IMR-90 (cell line): ENCODE measurements at regions of chr2 and their contacts with region 1.

Region 1: GRCh38 chr2:11129598-11130449 is 25.4 kb upstream of the SLC66A3 start:
- DNase-seq: no peak
- ATAC-seq: no peak
- H3K4me3 ChIP-seq: no peak overlapping the region
- H3K27ac ChIP-seq: no peak overlapping the region
- H3K4me1 ChIP-seq: peaks cover 14% of the 10 kb centered on the region
- H3K27me3 ChIP-seq: no peaks in the 10 kb centered on the region
- CTCF ChIP-seq: no peak
- POLR2A ChIP-seq: no peak
- RAD21 ChIP-seq: no peak

Region 2: DNA sequence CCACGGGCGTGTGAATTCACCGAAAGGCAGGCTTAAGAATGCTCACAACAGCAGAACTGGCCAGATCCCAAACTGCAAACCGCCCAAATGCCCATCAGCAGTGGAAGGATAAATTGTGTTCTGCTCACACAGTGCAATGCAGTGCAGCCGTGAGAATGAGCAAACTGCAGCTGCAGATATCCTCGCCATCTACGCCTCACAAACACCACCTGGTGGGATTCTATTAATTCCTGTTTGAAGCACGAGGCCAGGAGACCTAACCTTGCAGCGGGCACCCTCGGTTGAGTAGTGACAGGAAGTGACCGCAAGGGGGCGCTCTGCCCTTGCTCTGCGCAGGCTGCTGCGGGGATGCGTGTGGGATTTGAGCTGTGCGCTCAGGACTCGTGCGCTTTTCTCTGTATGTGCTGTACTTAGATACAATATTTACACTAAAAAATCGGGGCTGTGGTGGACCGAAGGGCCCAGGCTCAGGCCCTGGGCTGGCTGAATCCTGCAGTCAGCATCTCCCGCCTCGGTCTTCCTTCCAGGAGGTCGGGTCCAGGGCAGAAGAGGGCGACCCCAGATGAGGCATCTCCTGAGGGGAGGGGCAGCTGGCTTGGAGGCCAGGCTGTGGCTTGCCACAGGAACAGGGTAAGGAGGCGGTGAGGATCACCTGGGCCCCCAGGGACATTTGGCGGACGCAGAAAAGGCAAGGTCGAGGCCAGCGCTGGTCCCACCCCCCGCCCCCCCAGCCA is 297.5 kb before region 1 on chr2:
- CTCF ChIA-PET with region 1: interaction called, 35 read pairs
- POLR2A ChIA-PET with region 1: no interaction called
- dilution Hi-C with region 1: no loop called
- in situ Hi-C with region 1: no loop called
- intact Hi-C with region 1: no loop called
- DNase-seq: peak; percentile 77
- ATAC-seq: peak; percentile 94
- H3K4me3 ChIP-seq: no peak overlapping the region
- H3K27ac ChIP-seq: no peak overlapping the region
- H3K4me1 ChIP-seq: no peaks in the 10 kb centered on the region
- H3K27me3 ChIP-seq: peaks cover 34% of the 10 kb centered on the region
- CTCF ChIP-seq: peak; percentile 97
- POLR2A ChIP-seq: no peak
- RAD21 ChIP-seq: peak; percentile 98

Region 3: DNA sequence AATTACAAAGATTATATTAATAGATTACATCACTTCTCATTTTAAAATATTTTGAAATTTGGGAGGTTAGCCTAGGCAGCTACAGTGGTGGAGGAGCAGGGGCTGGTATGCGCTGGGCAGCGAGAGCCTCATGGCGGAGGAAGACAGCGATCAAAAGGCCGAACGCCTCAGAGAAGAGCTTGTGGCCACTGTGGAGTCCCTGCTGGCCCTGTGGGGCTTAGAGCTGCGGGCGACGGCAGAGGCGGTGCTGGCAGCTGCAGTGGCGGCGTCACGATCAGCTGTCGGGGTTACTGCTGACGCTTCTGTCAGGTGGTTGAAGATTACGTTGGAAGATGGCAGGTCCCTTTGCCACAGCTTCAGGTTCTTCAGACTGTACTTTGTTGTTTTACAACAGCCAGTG is 127.3 kb after region 1 on chr2:
- CTCF ChIA-PET with region 1: no interaction called
- POLR2A ChIA-PET with region 1: no interaction called
- dilution Hi-C with region 1: no loop called
- in situ Hi-C with region 1: no loop called
- intact Hi-C with region 1: no loop called
- DNase-seq: no peak
- ATAC-seq: no peak
- H3K4me3 ChIP-seq: no peak overlapping the region
- H3K27ac ChIP-seq: no peak overlapping the region
- H3K4me1 ChIP-seq: peaks cover 5% of the 10 kb centered on the region
- H3K27me3 ChIP-seq: no peaks in the 10 kb centered on the region
- CTCF ChIP-seq: no peak
- POLR2A ChIP-seq: no peak
- RAD21 ChIP-seq: no peak

Region 4: DNA sequence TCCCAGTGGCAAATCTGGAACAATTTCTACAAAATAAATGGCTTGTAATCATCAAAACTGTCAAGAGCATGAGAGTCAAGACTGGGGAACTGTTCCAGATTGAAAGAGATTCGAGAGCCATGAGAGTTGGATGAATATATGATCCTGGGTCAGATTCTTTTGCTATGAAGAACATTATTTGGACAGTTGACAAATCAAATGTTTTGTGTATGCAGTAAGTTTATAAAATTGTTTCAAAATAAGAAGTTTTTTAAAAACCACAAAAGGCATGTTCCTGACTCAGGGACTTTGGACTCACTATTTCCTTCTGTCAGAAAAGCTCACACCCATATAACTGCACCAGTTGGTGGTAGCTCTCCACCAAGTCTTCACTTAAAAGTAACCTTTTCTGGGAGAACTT is 176.1 kb after region 1 on chr2:
- CTCF ChIA-PET with region 1: no interaction called
- POLR2A ChIA-PET with region 1: no interaction called
- dilution Hi-C with region 1: no loop called
- in situ Hi-C with region 1: no loop called
- intact Hi-C with region 1: loop called (anchors 10 kb)
- DNase-seq: peak; percentile 92
- ATAC-seq: peak; percentile 95
- H3K4me3 ChIP-seq: no peak overlapping the region
- H3K27ac ChIP-seq: no peak overlapping the region
- H3K4me1 ChIP-seq: peaks cover 10% of the 10 kb centered on the region
- H3K27me3 ChIP-seq: no peaks in the 10 kb centered on the region
- CTCF ChIP-seq: no peak
- POLR2A ChIP-seq: no peak
- RAD21 ChIP-seq: no peak

Region 5: DNA sequence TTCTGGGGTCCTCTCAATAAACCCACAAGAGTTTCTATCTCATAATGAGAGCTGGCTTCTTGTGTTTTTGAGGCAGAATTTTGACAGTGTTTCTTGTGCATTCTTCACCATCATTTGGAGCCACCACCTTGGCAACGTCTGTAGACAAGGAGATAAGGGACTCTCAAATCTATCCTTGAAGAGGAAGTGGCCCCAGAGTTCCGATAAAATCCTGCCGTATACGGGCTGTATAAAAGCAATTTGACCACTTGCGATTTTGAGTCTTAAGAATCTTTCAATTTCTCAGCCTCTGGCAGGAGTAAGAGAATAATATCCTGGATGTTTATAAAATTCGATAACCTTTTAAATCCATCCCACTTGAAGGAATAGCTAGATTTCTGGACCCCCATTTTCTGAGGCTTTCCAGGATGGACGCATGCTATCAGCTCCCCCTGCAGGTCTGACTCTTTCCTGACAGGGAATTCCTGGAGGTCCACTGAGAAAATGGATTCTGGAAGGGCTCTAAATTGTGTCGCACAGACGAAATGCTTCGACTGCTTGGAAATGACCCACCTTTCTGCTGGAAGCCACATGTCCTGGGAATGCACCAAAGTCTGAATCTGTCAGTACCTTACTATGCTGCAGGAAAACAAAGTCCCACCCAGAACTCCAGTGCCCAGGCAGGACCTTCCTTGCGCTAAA is 282.1 kb after region 1 on chr2:
- CTCF ChIA-PET with region 1: interaction called, 14 read pairs
- POLR2A ChIA-PET with region 1: no interaction called
- dilution Hi-C with region 1: no loop called
- in situ Hi-C with region 1: no loop called
- intact Hi-C with region 1: loop called (anchors 1 kb)
- DNase-seq: peak; percentile 63
- ATAC-seq: peak; percentile 54
- H3K4me3 ChIP-seq: peak overlapping the region; percentile 37; the same call in 1 of the 2 replicates
- H3K27ac ChIP-seq: no peak overlapping the region
- H3K4me1 ChIP-seq: peaks cover 5% of the 10 kb centered on the region
- H3K27me3 ChIP-seq: no peaks in the 10 kb centered on the region
- CTCF ChIP-seq: peak; percentile 91
- POLR2A ChIP-seq: no peak
- RAD21 ChIP-seq: peak; percentile 92

Region 6: GRCh38 chr2:11446733-11447248 is 317.0 kb after region 1 on chr2:
- CTCF ChIA-PET with region 1: interaction called, 13 read pairs
- POLR2A ChIA-PET with region 1: no interaction called
- dilution Hi-C with region 1: no loop called
- in situ Hi-C with region 1: loop called (anchors 5 kb)
- intact Hi-C with region 1: loop called (anchors 1 kb)
- DNase-seq: peak; percentile 67
- ATAC-seq: peak; percentile 92
- H3K4me3 ChIP-seq: no peak overlapping the region
- H3K27ac ChIP-seq: no peak overlapping the region
- H3K4me1 ChIP-seq: no peaks in the 10 kb centered on the region
- H3K27me3 ChIP-seq: no peaks in the 10 kb centered on the region
- CTCF ChIP-seq: peak; percentile 76
- POLR2A ChIP-seq: no peak
- RAD21 ChIP-seq: peak; percentile 86

Region 7: DNA sequence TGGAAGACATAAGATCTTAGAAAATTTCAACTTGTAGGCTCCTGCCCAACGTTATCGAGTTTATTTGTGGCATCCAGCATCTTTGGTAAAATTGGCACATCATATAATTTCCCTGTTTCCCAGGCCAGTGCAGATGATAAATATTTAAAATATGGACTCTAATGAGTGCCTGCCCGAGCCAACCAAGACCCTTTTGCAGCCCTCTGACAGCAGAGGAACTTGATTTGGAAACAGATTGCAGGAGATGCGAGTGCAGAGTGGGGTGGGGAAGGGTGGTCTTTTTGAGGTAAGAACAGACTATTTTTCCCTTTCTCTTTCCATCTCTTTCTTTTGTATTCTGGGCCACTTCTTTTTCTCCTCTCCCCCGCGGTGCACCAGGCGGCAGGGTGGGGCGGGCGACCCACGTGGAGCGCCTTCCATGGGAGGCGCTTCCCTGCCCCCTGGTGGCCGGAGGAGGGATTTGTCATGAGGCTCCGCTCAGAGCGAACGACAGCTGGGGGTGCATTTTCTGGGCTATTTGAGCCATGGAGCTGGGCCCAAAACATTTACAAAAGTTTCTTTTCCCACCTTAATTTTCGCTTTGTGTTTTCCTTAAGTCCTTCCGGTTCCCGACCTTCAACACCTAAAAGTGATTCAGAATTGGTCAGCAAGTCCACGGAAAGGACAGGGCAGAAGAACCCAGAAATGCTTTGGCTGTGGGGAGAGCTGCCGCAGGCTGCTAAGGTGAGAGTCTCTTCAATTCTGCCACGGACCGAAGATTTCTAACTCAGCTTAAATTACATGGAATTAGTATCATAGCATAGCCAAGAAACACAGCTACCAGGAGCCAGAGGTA is 649.3 kb after region 1 on chr2:
- CTCF ChIA-PET with region 1: no interaction called
- POLR2A ChIA-PET with region 1: no interaction called
- dilution Hi-C with region 1: no loop called
- in situ Hi-C with region 1: loop called (anchors 25 kb)
- intact Hi-C with region 1: loop called (anchors 5 kb)
- DNase-seq: peak; percentile 48
- ATAC-seq: peak; percentile 92
- H3K4me3 ChIP-seq: no peak overlapping the region
- H3K27ac ChIP-seq: no peak overlapping the region
- H3K4me1 ChIP-seq: peaks cover 5% of the 10 kb centered on the region
- H3K27me3 ChIP-seq: no peaks in the 10 kb centered on the region
- CTCF ChIP-seq: peak; percentile 97
- POLR2A ChIP-seq: no peak
- RAD21 ChIP-seq: peak; percentile 95